ENCODE measurements at regions of chr12 and their contacts with region 1.

Region 1: DNA sequence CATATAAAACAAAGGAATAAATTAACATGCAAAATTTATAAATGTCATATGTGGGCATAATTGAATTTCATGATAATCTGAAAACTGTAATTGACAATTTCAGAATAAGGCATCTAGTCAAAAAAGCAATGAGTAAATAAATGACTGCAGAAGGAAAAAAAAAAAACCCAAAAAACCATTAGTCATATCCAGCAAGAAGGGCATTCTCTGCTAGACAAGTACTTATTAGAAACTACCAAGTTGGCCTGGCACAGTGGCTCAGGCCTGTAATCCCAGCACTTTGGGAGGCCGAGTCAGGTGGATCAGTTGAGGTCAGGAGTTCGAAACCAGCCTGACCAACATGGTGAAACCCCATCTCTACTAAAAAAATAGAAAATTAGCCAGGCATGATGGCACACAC is 17.5 kb downstream of the ZCRB1 start:
- DNase-seq: no peak
- H3K4me3 ChIP-seq: no peak overlapping the region
- H3K4me3 Mint-ChIP-seq: no peak overlapping the region
- H3K27ac ChIP-seq: no peak overlapping the region
- H3K27ac Mint-ChIP-seq: no peak overlapping the region
- H3K4me1 ChIP-seq: no peaks in the 10 kb centered on the region
- H3K4me1 Mint-ChIP-seq: no peaks in the 10 kb centered on the region
- H3K27me3 ChIP-seq: no peaks in the 10 kb centered on the region
- H3K27me3 Mint-ChIP-seq: no peaks in the 10 kb centered on the region

Region 2: GRCh38 chr12:42259699-42260098 is 48.7 kb before region 1 on chr12:
- CTCF ChIA-PET with region 1: no interaction called
- POLR2A ChIA-PET with region 1: interaction called, 10 read pairs
- DNase-seq: no peak
- H3K4me3 ChIP-seq: no peak overlapping the region
- H3K4me3 Mint-ChIP-seq: no peak overlapping the region
- H3K27ac ChIP-seq: no peak overlapping the region
- H3K27ac Mint-ChIP-seq: no peak overlapping the region
- H3K4me1 ChIP-seq: no peaks in the 10 kb centered on the region
- H3K4me1 Mint-ChIP-seq: peaks cover 0 to 4% (median 0%) of the 10 kb centered on the region in 3 donors
- H3K27me3 ChIP-seq: no peaks in the 10 kb centered on the region
- H3K27me3 Mint-ChIP-seq: no peaks in the 10 kb centered on the region

Measured in CD8-positive, alpha-beta memory T cell (primary cell).